Heart right ventricle (tissue), 16 donors: ENCODE measurements at regions of chr1 and their contacts with region 1.

Region 1: DNA sequence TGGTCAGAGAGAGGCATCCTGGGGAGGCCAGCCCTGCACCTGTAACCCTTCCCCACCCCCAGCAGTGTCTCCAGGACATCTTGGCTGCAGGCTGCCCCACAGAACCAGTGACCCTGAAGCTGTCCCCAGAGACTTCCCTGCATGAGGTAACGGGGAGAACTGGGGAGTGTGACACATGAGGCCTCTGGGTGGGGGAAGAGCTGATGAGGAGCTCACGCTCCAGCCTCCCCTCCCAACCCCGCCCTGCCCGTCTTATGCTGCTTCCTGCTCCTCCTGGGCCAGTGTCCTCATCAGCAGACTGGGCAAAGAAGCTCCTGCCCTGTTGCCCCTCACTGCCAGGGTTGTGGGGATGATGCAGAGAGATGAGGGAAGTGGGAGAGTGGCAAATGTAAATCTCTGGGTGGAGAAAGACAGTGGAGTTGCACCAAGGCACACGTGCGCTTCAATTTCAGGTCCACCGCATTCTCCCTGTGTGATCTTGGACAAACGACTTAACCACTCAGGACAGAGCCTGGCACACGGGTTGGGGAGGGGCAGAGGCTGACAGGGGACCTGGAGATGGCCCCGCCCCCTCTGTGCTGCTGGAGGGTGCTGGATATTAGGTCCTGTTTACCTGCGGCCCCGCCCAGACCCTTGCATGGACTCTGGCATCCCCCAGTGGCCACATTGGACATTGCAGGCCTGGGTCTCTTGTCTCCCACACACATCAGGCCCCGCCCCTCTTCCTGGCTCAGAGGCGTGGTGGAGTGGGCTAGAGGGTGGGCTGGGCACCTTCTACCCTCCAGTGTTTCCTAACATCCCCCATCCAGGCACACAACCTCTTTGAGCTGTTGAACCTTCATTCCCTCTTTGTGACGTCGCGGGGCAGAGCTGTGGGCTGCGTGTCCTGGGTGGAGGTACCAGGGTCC is 12.3 kb downstream of the CLCNKB start:
- DNase-seq: peak; percentile 83
- ATAC-seq: peak; percentile 69 to 89 (median 84)
- H3K4me3 ChIP-seq: no peak overlapping the region
- H3K27ac ChIP-seq: no peak overlapping the region
- H3K4me1 ChIP-seq: peaks cover 0 to 7% (median 0%) of the 10 kb centered on the region in 9 donors
- H3K27me3 ChIP-seq: no peaks in the 10 kb centered on the region
- CTCF ChIP-seq: peak; percentile 74 to 95 (median 90)

Region 2: DNA sequence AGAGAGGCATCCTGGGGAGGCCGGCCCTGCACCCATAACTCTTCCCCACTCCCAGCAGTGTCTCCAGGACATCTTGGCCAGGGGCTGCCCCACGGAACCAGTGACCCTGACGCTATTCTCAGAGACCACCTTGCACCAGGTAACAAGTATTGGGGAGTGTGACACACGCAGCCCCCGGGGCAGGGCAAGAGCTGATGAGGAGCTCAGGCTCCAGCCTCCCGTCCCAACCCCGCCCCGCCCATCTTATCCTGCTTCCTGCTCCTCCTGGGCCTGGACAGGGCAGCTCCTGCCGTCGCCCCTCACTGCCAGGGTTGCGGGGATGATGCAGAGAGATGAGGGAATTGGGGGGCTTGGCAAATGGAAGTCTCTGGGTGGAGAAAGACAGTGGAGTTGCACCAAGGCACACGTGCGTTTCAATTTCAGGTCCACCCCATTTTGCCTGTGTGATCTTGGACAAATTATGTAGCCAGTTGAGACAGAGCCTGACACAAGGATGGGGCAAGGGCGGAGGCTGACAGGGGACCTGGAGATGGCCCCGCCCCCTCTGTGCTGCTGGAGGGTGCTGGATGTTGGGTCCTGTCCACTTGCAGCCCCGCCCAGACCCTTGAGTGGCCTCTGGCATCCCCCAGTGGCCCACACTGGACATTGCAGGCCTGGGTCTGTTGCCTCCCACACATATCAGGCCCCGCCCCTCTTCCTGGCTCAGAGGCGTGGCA is 23.3 kb before region 1 on chr1:
- intact Hi-C with region 1: loop called in 4 of 10 experiments (anchors 1 to 2 kb)
- DNase-seq: peak; percentile 87
- ATAC-seq: peak; percentile 84 to 97 (median 92)
- H3K4me3 ChIP-seq: no peak overlapping the region
- H3K27ac ChIP-seq: no peak overlapping the region
- H3K4me1 ChIP-seq: peaks cover 0 to 11% (median 4%) of the 10 kb centered on the region in 9 donors
- H3K27me3 ChIP-seq: peaks cover 0 to 22% (median 6%) of the 10 kb centered on the region in 7 donors
- CTCF ChIP-seq: peak; percentile 81 to 99 (median 95)

Region 3: GRCh38 chr1:16082289-16083038 is 26.6 kb after region 1 on chr1:
- intact Hi-C with region 1: no loop called
- DNase-seq: peak; percentile 57 to 78
- ATAC-seq: peak; percentile 31 to 64 (median 46)
- H3K4me3 ChIP-seq: no peak overlapping the region
- H3K27ac ChIP-seq: peak overlapping the region in 6 of 10 donors; percentile 9 to 54 (median 28)
- H3K4me1 ChIP-seq: peaks cover 5 to 55% (median 22%) of the 10 kb centered on the region in 9 donors
- H3K27me3 ChIP-seq: no peaks in the 10 kb centered on the region
- CTCF ChIP-seq: peak; percentile 71 to 93 (median 92)